SK-N-SH (cell line): ENCODE measurements at regions of chr2 and their contacts with region 1.

Region 1: DNA sequence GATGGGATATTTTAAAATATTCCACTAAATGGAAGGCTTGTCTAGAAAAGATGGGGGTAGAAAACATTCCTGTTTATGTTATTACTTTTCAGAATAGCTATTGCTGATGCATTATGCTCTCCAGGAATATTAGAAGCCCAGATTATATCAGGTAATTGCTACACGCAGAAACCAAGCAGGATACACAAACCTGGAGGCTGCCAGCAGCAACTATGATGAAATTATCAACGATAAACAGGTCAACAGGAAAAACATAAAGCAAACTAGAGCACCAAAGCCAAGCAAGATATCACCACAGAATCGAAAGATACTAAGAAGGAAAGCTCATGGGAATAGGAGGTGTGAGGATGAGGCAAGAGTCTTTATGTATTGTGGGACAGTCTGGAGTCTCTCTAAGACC is 113.2 kb upstream of the SPATS2L start:
- DNase-seq: peak; percentile 41
- H3K4me3 ChIP-seq: no peak overlapping the region
- H3K27ac ChIP-seq: peak overlapping the region in 1 of 2 experiments; percentile 76; a peak in 2 of 4 replicates
- H3K4me1 ChIP-seq: peaks cover 0 to 8% of the 10 kb centered on the region in 2 experiments; a peak in 2 of 4 replicates
- H3K27me3 ChIP-seq: no peaks in the 10 kb centered on the region
- CTCF ChIP-seq: no peak
- EP300 ChIP-seq: peak in 1 of 2 experiments; percentile 54; a peak in 2 of 4 replicates
- RAD21 ChIP-seq: peak; percentile 3; the same call in 1 of the 2 replicates

Region 2: DNA sequence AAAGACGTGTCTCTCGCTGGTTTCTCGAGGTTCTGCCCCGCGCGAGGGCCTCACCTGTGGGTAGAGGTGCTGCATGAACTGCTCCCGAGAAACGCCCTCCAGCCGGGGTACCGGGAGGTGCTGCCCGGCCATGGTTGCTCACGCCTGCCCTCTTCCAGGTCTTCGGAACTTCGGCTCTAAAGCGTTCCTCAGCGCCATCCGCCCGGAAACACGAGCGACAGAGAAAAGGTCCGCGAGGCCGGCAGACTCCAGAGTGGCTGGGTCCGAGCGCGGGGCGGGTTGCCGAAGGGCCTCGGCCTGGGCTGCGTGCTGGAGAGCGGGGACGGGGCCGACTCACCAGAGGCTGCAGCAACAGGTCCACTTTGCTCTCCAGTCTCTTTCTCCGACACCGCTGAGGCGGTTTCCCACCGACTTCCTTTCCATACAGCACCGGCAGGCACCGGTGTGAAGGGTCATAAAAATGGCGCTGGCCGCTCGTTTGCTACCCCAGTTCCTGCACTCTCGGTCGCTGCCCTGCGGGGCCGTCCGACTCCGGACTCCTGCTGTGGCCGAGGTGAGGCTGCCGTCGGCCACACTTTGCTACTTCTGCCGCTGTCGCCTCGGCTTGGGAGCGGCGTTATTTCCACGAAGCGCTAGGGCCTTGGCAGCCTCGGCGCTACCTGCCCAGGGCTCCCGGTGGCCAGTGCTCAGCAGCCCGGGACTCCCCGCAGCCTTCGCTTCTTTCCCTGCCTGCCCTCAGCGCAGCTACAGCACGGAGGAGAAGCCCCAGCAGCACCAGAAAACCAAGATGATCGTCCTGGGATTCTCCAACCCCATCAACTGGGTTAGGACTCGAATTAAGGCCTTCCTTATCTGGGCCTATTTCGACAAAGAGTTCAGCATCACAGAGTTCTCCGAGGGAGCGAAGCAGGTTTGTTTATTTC is 237.7 kb before region 1 on chr2 and contains the starts of genes MAIP1 and TYW5:
- CTCF ChIA-PET with region 1: no interaction called
- POLR2A ChIA-PET with region 1: no interaction called
- DNase-seq: peak; percentile 90
- H3K4me3 ChIP-seq: peak within 1 kb of the TSS; percentile 98 to 99
- H3K27ac ChIP-seq: peak within 1 kb of the TSS; percentile 91 to 99
- H3K4me1 ChIP-seq: peaks cover 0 to 8% of the 10 kb centered on the region in 2 experiments; a peak in 2 of 4 replicates
- H3K27me3 ChIP-seq: no peaks in the 10 kb centered on the region
- CTCF ChIP-seq: no peak; the same call in 1 of the 2 replicates
- EP300 ChIP-seq: 0 out of 4 replicates have a peak, but pooled peaks of 1 of the 2 experiments have one; percentile 36
- RAD21 ChIP-seq: no peak
- polyA plus RNA-seq, gene MAIP1: 11.5 and 15.8 TPM in 2 replicates
- polyA plus RNA-seq, gene TYW5: 3.6 and 4.7 TPM in 2 replicates

Region 3: GRCh38 chr2:200181755-200182154 is 11.6 kb before region 1 on chr2:
- CTCF ChIA-PET with region 1: interaction called, 13 read pairs
- POLR2A ChIA-PET with region 1: no interaction called
- DNase-seq: no peak
- H3K4me3 ChIP-seq: no peak overlapping the region
- H3K27ac ChIP-seq: no peak overlapping the region
- H3K4me1 ChIP-seq: peaks cover 0 to 2% of the 10 kb centered on the region in 2 experiments; a peak in 2 of 4 replicates
- H3K27me3 ChIP-seq: no peaks in the 10 kb centered on the region; the same call in 1 of the 2 replicates
- CTCF ChIP-seq: no peak
- EP300 ChIP-seq: no peak
- RAD21 ChIP-seq: no peak